ENCODE measurements at regions of chr11 and their contacts with region 1.

Region 1: GRCh38 chr11:42770444-42771065 is 541.2 kb upstream of the API5 start:
- DNase-seq: no peak
- H3K4me3 ChIP-seq: no peak overlapping the region
- H3K27ac ChIP-seq: no peak overlapping the region
- H3K4me1 ChIP-seq: no peaks in the 10 kb centered on the region
- H3K27me3 ChIP-seq: peaks cover 14% of the 10 kb centered on the region
- CTCF ChIP-seq: peak; percentile 80

Region 2: DNA sequence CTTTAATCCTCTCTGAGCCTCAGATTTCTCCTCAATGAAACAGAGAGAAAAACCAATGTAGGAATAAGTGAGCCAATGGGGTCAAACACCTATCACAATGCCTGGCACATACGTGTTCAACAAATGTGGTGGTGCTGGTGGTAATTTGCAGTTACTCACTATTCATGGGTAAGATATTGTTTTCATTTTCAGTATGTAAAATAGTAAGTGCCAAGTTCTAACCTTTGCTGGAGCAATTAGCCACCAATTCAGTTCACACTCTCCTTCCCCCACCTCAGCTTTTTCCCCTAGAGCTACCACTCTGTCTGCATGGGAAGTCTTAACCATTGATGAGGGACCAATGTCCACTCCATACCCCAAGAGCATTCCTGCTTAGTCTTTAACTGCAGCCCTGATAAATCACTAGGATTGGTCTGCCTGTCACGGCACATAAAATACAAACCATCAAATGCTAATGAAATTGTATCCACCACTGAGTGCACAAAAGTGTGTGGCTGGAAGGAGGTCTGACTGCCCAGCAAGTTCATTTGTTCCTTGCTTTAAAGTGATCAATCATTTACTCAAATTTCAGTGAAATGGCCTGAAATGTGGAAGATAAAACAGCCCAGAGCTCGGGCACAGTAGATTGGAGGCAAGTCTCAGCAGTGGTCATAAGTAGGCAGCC is 353.8 kb after region 1 on chr11:
- intact Hi-C with region 1: loop called (anchors 10 kb)
- DNase-seq: no peak
- H3K4me3 ChIP-seq: no peak overlapping the region
- H3K27ac ChIP-seq: peak overlapping the region; percentile 38
- H3K4me1 ChIP-seq: no peaks in the 10 kb centered on the region
- H3K27me3 ChIP-seq: no peaks in the 10 kb centered on the region
- CTCF ChIP-seq: no peak

Region 3: DNA sequence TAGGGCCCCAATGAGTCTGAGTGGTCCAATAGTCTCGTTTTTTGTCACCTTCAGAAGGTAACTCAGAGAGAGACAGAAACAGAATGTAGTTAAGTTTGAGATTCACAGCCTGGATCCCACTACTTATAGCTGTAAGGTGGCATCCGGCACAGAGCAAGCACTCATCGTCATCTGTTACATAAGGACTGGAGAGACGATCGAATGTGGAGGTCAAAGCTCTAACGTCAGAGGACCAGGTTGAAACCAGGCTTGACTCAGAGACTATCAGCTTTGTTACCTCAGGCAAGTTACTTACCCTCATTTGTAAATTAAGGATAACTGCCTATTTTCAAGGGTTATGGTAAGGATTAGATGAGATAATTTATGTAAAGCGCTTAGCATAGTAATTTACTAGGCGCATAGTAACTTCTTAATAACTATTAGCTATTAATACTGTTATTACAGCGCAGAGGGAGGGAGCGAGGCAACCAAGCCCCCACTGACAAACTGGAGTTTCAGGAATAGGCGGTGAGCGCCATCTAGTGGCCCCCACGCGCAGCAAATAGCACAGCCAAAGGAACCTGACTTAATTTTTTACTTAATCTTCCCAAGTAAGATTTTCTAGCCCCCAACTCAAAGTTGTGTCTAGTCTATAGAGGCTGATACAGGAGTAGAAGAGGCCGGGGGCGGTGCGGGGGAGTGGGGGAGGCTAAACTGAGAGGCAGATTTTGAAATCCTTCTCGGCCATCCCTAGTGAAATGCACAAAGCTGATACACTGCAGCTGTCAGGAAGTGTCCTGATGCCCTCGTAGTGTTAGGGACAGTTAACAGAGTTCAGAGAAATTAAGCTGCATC is 512.3 kb after region 1 on chr11:
- intact Hi-C with region 1: loop called (anchors 5 kb)
- DNase-seq: peak; percentile 25
- H3K4me3 ChIP-seq: no peak overlapping the region
- H3K27ac ChIP-seq: no peak overlapping the region
- H3K4me1 ChIP-seq: peaks cover 6% of the 10 kb centered on the region
- H3K27me3 ChIP-seq: peaks cover 71% of the 10 kb centered on the region
- CTCF ChIP-seq: peak; percentile 95

Measured in left ventricle myocardium inferior (tissue), 1 donor.